HEK293T (cell line): ENCODE measurements at regions of chr11 and their contacts with region 1.

Region 1: DNA sequence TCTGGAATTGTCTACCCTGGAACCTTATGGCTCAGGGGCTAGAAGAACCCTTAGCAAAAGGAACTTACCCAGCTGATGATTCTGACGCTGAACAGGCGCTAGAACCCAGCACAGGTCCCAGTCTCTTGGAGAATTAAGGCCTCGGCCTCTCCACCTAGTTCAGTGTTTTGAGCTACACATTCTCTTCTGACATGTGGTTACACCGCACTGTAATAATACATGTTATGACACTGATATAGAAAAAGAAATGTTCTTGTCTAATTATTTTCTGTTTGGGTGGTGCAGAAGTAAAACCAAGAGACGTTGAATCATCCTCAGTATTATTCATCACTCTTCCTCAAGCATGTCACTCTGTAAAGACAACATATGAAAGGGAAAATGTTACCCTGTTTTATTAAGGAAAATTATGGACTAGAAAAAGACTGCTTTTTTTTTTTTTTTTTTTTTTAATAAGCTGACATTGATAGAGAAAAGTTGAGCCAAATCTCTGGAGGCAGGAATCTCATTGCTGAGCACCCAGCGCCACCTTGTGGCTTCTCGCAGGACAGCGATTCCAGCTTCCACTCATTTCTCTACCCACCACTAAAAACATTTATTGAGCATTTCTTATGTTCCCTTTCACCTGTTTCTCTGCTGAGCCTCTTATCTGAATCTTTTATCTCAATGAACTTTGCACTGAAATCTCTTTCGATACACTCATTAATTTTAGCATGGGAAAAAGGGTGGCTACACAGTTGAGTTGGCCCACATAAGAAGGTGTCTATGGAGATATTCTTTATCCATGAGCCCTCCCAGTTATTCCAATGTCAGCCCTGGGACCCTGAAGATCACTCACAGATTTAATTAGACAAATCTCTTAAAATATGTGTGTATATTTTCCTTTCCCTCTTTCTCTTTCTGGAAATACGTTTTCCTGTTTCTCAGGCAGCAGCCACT is 12.6 kb upstream of the APLNR start:
- DNase-seq: peak; percentile 57

Region 2: DNA sequence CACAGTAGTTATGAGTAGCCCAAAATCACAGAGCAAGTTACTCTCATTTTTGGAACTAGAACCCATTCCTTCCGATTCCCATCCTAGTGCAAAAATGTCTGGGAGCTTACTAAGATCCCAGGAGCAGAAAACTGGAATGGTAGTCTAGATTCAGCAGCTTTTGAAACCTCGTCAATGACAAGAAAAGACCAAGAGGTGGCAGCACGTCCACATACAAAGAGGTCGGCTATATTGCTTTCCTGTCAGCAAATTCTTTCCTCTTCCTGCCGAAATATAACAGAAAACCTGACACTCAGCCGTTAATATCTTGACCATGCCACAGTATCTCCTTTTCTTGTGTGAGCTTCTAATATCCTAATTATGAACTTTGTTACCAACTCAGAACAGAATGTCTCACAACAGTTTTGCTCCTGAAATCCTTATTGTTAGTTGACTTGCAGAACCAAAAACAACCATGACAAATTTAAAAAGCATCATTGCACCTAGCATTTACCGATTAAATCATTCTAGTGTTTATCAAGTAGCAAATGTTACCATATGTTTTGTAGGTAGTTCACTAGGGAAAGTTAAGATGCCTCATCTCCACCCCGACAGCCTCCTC is 408.3 kb before region 1 on chr11:
- CTCF ChIA-PET with region 1: interaction called, 41 read pairs
- POLR2A ChIA-PET with region 1: no interaction called
- DNase-seq: peak; percentile 41

Region 3: DNA sequence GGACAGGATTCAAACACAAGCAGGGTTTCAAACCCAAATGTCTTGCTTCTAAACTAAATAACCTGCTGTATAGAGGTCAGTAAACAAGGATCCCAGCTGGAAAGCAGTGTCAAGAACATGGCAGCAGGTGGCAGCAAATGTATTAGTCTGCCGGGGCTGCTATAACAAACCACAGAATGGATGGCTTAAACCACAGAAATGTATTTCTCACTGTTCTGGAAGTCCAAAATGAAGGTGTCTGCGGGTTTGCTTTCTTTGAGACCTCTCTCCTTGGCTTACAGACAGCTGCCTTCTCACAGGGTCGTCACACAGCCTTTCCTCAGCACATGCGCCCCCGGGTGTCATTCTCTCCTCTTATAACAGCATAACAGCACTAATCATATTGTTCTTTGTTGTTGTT is 133.0 kb before region 1 on chr11:
- CTCF ChIA-PET with region 1: interaction called, 19 read pairs
- POLR2A ChIA-PET with region 1: no interaction called
- DNase-seq: peak; percentile 41

Region 4: GRCh38 chr11:57131080-57131790 is 118.4 kb before region 1 on chr11:
- CTCF ChIA-PET with region 1: interaction called, 22 read pairs
- POLR2A ChIA-PET with region 1: no interaction called
- DNase-seq: peak; percentile 15